Dendritic cell treated with granulocyte-macrophage colony-stimulating factor and Interleukin-4, amounts not matched to agents 40 ng/mL and 50 ng/mL, for 4 days (primary cell): ENCODE measurements at regions of chr16 and their contacts with region 1.

Region 1: DNA sequence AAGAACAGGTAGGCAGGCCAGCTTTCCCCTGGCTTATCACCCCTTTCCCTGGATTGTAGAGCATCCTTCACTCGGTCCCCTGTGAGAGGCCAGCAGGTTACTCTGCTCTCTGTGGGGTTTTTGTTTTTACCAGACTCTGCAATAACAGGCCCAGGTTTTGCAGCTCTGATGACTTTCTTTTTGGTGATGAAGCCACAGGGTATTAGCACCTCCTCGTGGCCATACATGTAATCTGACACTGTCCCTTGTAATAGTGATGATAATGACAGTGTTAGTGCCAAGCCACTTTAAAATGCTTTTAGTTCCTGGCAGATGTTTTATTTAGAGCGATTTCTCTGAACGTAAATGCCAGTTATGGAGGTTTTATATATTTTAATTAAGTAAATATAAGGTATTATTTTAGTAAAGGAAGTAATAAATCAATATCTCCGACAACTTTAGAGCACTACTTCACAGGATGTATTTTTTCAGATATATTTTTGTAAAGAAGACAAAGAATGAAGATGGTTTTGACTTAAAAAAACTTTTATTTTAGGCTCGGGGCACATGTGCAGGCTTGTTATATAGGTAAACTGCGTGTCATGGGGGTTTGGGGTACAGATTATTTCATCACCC is 38.0 kb upstream of the CPHXL start:
- H3K4me3 Mint-ChIP-seq: no peak overlapping the region
- H3K27ac Mint-ChIP-seq: no peak overlapping the region
- H3K4me1 Mint-ChIP-seq: no peaks in the 10 kb centered on the region
- H3K27me3 Mint-ChIP-seq: peaks cover 5% of the 10 kb centered on the region

Region 2: DNA sequence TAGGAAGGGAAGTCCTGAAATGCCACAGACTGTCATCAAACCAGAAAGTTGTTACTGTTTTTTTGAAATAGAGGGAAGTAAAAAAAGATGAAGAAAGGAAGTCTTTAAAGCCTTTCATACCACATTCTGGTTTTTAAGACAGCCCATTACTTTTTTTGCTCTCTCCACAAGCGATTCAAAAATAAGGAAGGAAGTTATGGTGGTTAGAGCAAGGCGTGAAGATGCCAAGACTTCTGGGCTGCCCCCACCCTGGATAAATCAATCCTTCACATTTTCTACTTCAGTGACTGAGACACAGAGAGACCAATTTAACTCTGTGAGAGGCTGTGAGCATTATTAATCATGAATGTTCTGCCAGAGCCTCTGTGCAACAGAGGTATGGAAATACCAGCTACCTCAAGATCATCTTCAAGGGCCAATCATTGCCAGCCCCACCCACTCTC is 430.5 kb before region 1 on chr16:
- intact Hi-C with region 1: no loop called
- H3K4me3 Mint-ChIP-seq: no peak overlapping the region
- H3K27ac Mint-ChIP-seq: no peak overlapping the region
- H3K4me1 Mint-ChIP-seq: peaks cover 17% of the 10 kb centered on the region
- H3K27me3 Mint-ChIP-seq: peaks cover 96% of the 10 kb centered on the region

Region 3: DNA sequence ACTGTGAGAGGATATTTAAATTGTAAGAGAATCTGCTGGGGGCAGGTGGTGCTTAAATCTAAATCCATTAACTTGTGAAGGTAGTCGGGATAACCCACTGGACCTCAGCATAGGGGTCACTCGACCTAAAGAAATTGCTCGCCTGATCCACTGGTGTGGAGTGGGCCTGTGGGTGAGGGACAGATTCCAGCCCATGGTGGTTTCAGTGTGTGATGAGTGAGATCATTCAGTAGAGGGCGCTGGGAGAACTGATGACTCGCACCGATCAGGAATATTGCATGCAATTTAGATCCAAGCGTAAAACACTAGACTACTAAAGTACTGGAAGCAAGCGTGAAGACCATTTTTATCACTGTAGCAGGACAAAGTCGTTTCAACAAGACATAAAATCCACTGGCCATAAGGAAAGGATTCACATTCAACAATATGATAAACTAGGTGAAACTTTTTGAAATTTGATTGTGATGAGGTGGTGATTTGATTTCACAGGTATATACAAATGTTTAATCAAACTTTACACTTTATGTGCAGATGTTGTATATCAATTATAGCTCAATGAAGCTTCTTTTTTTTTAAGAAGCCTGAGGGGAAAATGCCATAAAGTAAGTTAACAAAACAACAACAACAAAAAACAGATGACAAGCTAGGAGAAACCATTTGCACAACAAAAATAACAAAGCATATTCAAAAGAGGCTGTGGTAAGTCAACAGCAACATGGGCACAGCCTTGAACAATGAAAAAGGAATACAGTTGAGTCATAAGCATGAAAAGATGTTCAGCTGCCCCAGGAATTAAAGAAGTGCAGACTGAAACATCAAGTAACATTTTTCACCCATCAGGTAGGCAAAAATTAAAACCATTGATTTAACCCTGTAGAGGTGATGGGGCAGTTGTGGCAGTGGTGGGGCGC is 292.3 kb before region 1 on chr16:
- intact Hi-C with region 1: loop called (anchors 2 kb)
- H3K4me3 Mint-ChIP-seq: no peak overlapping the region
- H3K27ac Mint-ChIP-seq: no peak overlapping the region
- H3K4me1 Mint-ChIP-seq: no peaks in the 10 kb centered on the region
- H3K27me3 Mint-ChIP-seq: no peaks in the 10 kb centered on the region

Region 4: GRCh38 chr16:75653922-75654321 is 110.3 kb before region 1 on chr16:
- intact Hi-C with region 1: loop called (anchors 10 kb)
- H3K4me3 Mint-ChIP-seq: no peak overlapping the region
- H3K27ac Mint-ChIP-seq: no peak overlapping the region
- H3K4me1 Mint-ChIP-seq: peaks cover 34% of the 10 kb centered on the region
- H3K27me3 Mint-ChIP-seq: no peaks in the 10 kb centered on the region